ENCODE measurements at regions of chr18 and their contacts with region 1.

Region 1: DNA sequence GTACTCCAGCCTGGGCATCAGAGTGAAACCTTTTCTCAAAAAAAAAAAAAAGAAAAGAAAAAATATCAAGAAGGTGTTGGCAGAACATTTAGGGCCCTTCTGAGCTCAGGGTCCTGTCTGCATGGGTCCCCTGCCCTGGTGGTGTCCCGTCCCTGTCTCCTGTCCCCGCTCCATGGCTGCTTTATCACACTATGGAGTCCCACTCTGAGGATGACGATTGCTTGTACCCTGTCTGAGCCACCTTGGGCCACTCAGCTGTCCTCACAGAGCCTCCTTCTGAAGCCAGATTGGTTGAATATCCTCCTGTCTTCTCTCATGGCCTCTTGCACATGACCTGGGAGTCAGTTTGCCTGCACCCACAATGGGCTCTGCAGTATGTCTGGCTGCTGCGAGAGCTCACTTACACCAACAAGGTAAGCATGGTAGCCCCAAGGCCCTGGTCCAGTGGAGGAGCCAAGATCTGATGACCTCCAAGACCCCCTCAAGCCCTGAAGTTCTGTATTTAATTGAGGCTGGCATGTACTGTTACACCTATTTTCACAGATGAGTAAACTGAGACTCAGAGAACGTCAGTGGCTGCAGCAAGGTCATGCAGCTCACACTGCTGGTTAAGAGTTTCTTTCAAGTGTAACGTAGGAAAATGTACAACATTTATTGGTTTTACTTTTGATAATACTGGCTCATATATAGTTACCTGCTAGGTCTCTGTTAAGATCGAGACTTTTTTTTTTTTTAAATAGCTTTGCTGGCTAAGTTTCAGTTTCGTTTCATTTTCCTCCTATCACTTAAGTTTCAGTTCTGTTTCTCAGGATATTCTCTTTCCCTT is 16.9 kb upstream of the ZCCHC2 start:
- DNase-seq: peak; percentile 29
- H3K4me3 Mint-ChIP-seq: peak overlapping the region; percentile 73
- H3K27ac Mint-ChIP-seq: peak overlapping the region; percentile 97
- H3K4me1 Mint-ChIP-seq: peaks cover 20% of the 10 kb centered on the region
- H3K27me3 Mint-ChIP-seq: no peaks in the 10 kb centered on the region

Region 2: GRCh38 chr18:62339106-62339988 is 166.5 kb before region 1 on chr18:
- intact Hi-C with region 1: loop called (anchors 1 kb)
- DNase-seq: peak; percentile 23
- H3K4me3 Mint-ChIP-seq: peak overlapping the region; percentile 61
- H3K27ac Mint-ChIP-seq: peak overlapping the region; percentile 96
- H3K4me1 Mint-ChIP-seq: peaks cover 69% of the 10 kb centered on the region
- H3K27me3 Mint-ChIP-seq: no peaks in the 10 kb centered on the region

Region 3: GRCh38 chr18:62450546-62451406 is 55.1 kb before region 1 on chr18:
- intact Hi-C with region 1: loop called (anchors 5 kb)
- DNase-seq: no peak
- H3K4me3 Mint-ChIP-seq: no peak overlapping the region
- H3K27ac Mint-ChIP-seq: no peak overlapping the region
- H3K4me1 Mint-ChIP-seq: peaks cover 24% of the 10 kb centered on the region
- H3K27me3 Mint-ChIP-seq: no peaks in the 10 kb centered on the region

Region 4: GRCh38 chr18:62522504-62523254 is 16.8 kb after region 1 on chr18 and contains the start of gene ZCCHC2:
- intact Hi-C with region 1: loop called (anchors 1 kb)
- DNase-seq: peak; percentile 99
- H3K4me3 Mint-ChIP-seq: peak within 1 kb of the TSS; percentile 95
- H3K27ac Mint-ChIP-seq: peak within 1 kb of the TSS; percentile 88
- H3K4me1 Mint-ChIP-seq: peaks cover 29% of the 10 kb centered on the region
- H3K27me3 Mint-ChIP-seq: no peaks in the 10 kb centered on the region
- total RNA-seq, gene ZCCHC2: 43.8 and 48.6 TPM in 2 replicates

Measured in activated T-helper 2 cell treated with anti-CD3 and anti-CD28 coated beads, Interferon-gamma antibody, Interleukin-2, Interleukin-4, amounts not matched to agents 10 μg/mL and 5 μg/mL and 100 μg/mL, durations not matched to agents 14 hours and 24 hours and 36 hours (primary cell).